ENCODE measurements at regions of chr3 and their contacts with region 1.

Region 1: GRCh38 chr3:42247576-42248027 is 18.4 kb downstream of the CCK start:
- DNase-seq: no peak
- ATAC-seq: peak; percentile 31

Region 2: GRCh38 chr3:41819226-41819625 is 428.4 kb before region 1 on chr3:
- intact Hi-C with region 1: no loop called
- DNase-seq: no peak
- ATAC-seq: no peak

Region 3: GRCh38 chr3:41933146-41933676 is 314.4 kb before region 1 on chr3:
- intact Hi-C with region 1: no loop called
- DNase-seq: no peak
- ATAC-seq: no peak

Region 4: GRCh38 chr3:42547401-42547945 is 299.9 kb after region 1 on chr3:
- intact Hi-C with region 1: loop called (anchors 10 kb)
- DNase-seq: peak; percentile 82
- ATAC-seq: peak; percentile 56